HEK293 (cell line): ENCODE measurements at regions of chr22 and their contacts with region 1.

Region 1: GRCh38 chr22:37643225-37643847 is 3.9 kb downstream of the SH3BP1 start:
- H3K4me3 ChIP-seq: no peak overlapping the region
- H3K27ac ChIP-seq: no peak overlapping the region
- H3K4me1 ChIP-seq: peaks cover 8% of the 10 kb centered on the region; the same call in 1 of the 2 replicates
- CTCF ChIP-seq: peak; percentile 89

Region 2: GRCh38 chr22:37616201-37617083 is 26.9 kb before region 1 on chr22:
- CTCF ChIA-PET with region 1: interaction called, 18 read pairs
- POLR2A ChIA-PET with region 1: interaction called, 4 read pairs
- H3K4me3 ChIP-seq: no peak overlapping the region
- H3K27ac ChIP-seq: no peak overlapping the region
- H3K4me1 ChIP-seq: no peaks in the 10 kb centered on the region
- CTCF ChIP-seq: no peak

Region 3: GRCh38 chr22:37664249-37665101 is 21.1 kb after region 1 on chr22:
- CTCF ChIA-PET with region 1: interaction called, 138 read pairs
- POLR2A ChIA-PET with region 1: interaction called, 85 read pairs
- H3K4me3 ChIP-seq: no peak overlapping the region
- H3K27ac ChIP-seq: no peak overlapping the region
- H3K4me1 ChIP-seq: peaks cover 12% of the 10 kb centered on the region
- CTCF ChIP-seq: no peak

Region 4: DNA sequence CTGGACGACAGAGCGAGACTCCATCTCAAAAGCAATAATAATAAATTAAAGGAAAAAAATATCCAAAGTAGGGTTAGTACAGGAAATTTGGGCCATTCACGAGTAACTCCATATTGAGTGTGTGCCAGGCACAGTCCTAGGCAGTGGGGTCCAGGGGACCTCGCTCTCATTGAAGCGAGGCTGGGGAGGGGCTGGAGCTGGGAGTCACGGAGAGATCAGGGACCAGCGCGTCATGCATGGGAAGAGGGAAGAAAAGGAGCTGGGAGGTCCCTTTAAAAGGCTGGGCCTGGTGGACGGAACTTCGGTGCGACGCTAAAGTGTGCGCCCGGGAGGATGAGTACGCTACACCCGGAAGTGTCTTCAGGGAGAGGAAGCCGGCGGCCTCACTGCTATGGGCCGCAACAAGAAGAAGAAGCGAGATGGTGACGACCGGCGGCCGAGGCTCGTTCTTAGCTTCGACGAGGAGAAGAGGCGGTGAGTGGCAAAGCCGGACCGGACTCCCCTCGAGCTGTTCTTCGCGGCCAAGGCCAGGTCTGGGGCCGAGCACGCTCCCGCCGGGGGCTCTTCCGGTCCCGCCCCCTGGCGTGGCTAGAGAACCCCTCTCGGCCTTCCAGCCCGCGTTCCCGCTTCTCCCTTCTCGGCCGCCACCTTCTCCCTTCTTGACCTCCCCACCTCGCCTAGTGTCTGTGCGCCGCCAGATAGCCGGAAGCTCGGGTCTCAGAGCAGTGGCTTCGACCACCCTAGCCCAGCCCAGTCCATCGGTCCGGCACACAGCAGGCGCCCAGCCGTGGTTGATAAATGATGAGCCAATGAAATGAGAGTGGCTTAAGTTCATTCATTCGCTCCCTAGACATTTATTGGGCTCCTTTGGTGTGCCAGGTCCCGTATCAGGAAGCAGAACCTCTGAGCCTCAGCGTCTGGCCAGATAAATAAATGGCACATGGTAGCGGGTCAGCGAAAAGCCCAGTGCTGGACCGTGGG is 43.0 kb after region 1 on chr22 and contains the start of gene NOL12:
- CTCF ChIA-PET with region 1: interaction called, 353 read pairs
- POLR2A ChIA-PET with region 1: interaction called, 15 read pairs
- H3K4me3 ChIP-seq: peak within 1 kb of the TSS; percentile 77
- H3K27ac ChIP-seq: peak within 1 kb of the TSS; percentile 81
- H3K4me1 ChIP-seq: peaks cover 2% of the 10 kb centered on the region; the same call in 1 of the 2 replicates
- CTCF ChIP-seq: peak; percentile 12; the same call in 1 of the 2 replicates

Region 5: GRCh38 chr22:37741312-37741795 is 98.0 kb after region 1 on chr22:
- CTCF ChIA-PET with region 1: interaction called, 12 read pairs
- POLR2A ChIA-PET with region 1: interaction called, 3 read pairs
- H3K4me3 ChIP-seq: no peak overlapping the region
- H3K27ac ChIP-seq: no peak overlapping the region
- H3K4me1 ChIP-seq: 0 out of 2 replicates have a peak, but pooled peaks cover 2% of the 10 kb centered on the region
- CTCF ChIP-seq: no peak